HAP-1 (cell line): ENCODE measurements at regions of chr11 and their contacts with region 1.

Region 1: GRCh38 chr11:102346748-102347461 is at the start of gene BIRC2:
- DNase-seq: peak; percentile 76 to 95
- H3K4me3 ChIP-seq: peak within 1 kb of the TSS; percentile 82
- H3K4me1 ChIP-seq: peaks cover 7% of the 10 kb centered on the region
- H3K27me3 ChIP-seq: no peaks in the 10 kb centered on the region

Region 2: DNA sequence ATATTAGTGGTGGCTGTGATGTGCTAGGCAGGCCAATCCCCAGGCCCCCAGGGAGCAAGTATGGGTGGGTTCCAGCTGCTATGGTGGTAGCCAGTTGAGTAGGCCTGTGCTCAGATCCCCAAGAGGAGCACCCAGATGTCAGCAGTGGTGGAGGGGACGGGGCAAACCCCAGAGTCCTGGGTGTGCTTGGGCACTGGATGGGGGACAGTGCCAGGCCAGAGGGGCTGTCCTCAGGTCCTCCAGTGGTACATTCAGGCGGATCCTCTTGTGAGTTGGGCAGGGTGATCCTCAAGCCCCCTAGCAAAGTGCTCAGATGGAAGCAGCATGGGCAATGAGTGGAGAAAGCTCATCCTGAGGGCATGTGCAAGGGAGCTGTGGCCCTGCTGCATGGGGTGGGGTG is 273.7 kb before region 1 on chr11:
- in situ Hi-C with region 1: no loop called
- DNase-seq: no peak
- H3K4me3 ChIP-seq: no peak overlapping the region
- H3K4me1 ChIP-seq: no peaks in the 10 kb centered on the region
- H3K27me3 ChIP-seq: peaks cover 4% of the 10 kb centered on the region; the same call in 1 of the 2 replicates

Region 3: GRCh38 chr11:102287964-102288724 is 58.8 kb before region 1 on chr11:
- in situ Hi-C with region 1: loop called (anchors 5 kb)
- DNase-seq: peak; percentile 70 to 87
- H3K4me3 ChIP-seq: no peak overlapping the region
- H3K4me1 ChIP-seq: peaks cover 19% of the 10 kb centered on the region
- H3K27me3 ChIP-seq: no peaks in the 10 kb centered on the region

Region 4: DNA sequence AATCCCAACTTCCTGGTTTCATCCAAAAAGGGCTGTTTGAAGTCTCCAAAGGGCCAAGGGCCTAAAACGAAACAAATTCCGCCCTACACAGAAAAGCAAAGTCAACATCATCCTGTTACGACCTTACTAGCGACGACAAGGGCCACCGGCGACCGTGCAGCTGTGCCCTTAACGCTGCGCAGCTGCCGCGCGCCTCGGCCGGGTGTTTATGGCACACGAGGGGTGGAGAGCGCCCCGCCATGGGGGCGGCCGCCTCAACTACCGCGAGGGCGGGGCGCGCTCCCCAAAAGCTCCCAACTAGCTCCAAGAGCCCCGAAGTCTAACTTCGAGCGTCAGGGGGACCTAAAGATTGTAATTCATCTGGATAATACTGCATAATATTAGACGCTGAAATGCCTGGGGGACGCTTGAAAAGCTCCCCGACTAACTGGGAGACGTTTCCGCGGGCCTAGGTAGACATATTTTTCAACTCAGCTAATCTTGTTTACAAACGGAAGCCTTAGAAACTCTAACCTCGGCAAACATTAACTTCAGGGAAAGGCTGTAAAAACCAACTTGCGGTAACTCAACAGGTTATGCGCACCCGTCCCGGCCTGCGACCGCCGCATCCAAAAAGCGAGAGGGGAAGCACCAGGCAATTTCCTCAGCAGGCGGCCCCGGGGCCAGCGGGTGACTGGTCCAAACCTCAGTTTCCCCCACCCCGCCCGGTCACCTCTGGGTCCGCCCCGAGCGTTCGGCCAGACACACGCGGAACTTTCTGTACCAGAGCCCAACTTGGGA is 105.0 kb after region 1 on chr11:
- in situ Hi-C with region 1: no loop called
- DNase-seq: peak; percentile 47 to 66
- H3K4me3 ChIP-seq: peak overlapping the region; percentile 73
- H3K4me1 ChIP-seq: peaks cover 41% of the 10 kb centered on the region
- H3K27me3 ChIP-seq: no peaks in the 10 kb centered on the region

Region 5: DNA sequence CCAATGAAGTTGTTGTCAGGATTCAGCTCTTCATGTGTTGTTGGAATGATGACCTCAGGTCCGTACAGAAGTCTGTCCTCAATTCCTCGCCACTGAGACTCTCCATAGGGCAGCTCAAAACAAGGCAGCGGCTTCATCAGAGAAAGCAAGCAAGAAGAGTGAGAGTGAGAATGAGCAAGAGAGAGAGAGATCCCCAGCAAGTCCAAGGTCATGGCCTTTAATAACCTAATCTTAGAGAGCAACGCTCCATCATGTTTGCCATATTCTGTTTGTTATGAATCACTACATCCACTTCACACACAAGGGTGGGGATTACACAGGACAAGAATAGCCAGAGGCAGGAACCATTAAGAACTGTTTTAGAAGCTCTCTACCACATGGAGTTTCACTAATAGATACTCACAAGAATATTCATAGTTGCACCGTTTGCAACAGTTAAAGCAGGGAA is 207.0 kb after region 1 on chr11:
- in situ Hi-C with region 1: no loop called
- DNase-seq: no peak
- H3K4me3 ChIP-seq: no peak overlapping the region
- H3K4me1 ChIP-seq: no peaks in the 10 kb centered on the region
- H3K27me3 ChIP-seq: no peaks in the 10 kb centered on the region